ENCODE measurements at regions of chr5 and their contacts with region 1.

Region 1: GRCh38 chr5:106545325-106545724 is 1125.4 kb downstream of the EFNA5 start:
- DNase-seq: peak; percentile 80
- ATAC-seq: peak; percentile 97
- H3K4me3 ChIP-seq: no peak overlapping the region
- H3K27ac ChIP-seq: peak overlapping the region; percentile 69
- H3K4me1 ChIP-seq: peaks cover 13% of the 10 kb centered on the region
- H3K27me3 ChIP-seq: no peaks in the 10 kb centered on the region
- CTCF ChIP-seq: no peak

Region 2: GRCh38 chr5:106574820-106575219 is 29.5 kb after region 1 on chr5:
- CTCF ChIA-PET with region 1: no interaction called
- POLR2A ChIA-PET with region 1: interaction called, 47 read pairs
- intact Hi-C with region 1: no loop called
- DNase-seq: no peak
- ATAC-seq: no peak
- H3K4me3 ChIP-seq: no peak overlapping the region
- H3K27ac ChIP-seq: no peak overlapping the region
- H3K4me1 ChIP-seq: no peaks in the 10 kb centered on the region
- H3K27me3 ChIP-seq: no peaks in the 10 kb centered on the region
- CTCF ChIP-seq: no peak

Region 3: GRCh38 chr5:106730912-106731311 is 185.6 kb after region 1 on chr5:
- CTCF ChIA-PET with region 1: no interaction called
- POLR2A ChIA-PET with region 1: no interaction called
- intact Hi-C with region 1: no loop called
- DNase-seq: no peak
- ATAC-seq: no peak
- H3K4me3 ChIP-seq: no peak overlapping the region
- H3K27ac ChIP-seq: no peak overlapping the region
- H3K4me1 ChIP-seq: no peaks in the 10 kb centered on the region
- H3K27me3 ChIP-seq: no peaks in the 10 kb centered on the region
- CTCF ChIP-seq: no peak